ENCODE measurements at regions of chr11 and their contacts with region 1.

Region 1: GRCh38 chr11:94623120-94623735 is 56.1 kb downstream of the PIWIL4 start:
- H3K4me3 ChIP-seq: no peak overlapping the region
- H3K27ac ChIP-seq: no peak overlapping the region
- H3K4me1 ChIP-seq: no peaks in the 10 kb centered on the region
- CTCF ChIP-seq: peak; percentile 81

Region 2: DNA sequence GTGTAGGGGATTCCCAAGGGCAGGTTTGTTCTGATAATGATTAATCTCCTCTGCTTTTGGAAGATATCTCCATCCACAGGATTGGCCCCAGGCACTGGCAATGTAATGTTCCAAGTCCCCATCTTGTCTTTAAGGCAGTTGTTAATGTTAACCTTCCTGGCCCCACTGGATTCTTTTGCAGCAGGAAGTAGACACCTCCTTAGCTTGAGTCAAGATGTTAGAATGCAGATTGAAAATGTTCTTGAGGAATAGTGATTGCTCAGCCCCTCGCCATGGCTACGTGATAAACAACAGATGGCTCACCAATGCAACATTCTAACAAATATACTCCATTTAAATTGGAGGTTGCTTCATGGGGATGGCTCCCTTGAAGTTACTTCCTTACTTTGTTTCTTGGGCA is 594.8 kb before region 1 on chr11:
- CTCF ChIA-PET with region 1: no interaction called
- POLR2A ChIA-PET with region 1: no interaction called
- H3K4me3 ChIP-seq: no peak overlapping the region
- H3K27ac ChIP-seq: no peak overlapping the region
- H3K4me1 ChIP-seq: 0 out of 2 replicates have a peak, but pooled peaks cover 7% of the 10 kb centered on the region
- CTCF ChIP-seq: no peak

Region 3: DNA sequence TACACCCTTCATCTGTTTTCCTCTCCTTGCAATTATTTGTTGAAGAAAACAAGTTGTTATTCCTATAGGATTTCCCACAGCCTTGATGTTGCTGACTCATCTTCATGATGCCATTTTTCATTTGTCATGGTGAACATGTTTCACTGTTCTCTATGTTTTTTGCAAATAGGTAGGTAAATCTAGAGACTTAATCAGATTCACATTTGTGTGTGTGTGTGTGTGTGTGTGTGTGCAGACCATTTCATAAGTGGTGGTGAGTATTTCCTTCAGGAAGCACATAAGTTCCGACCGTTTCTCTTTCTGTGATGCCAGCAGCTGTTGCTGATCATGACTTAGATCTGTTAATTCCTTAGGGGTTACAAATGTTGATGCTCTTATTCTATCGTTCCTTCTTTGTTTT is 399.1 kb before region 1 on chr11:
- CTCF ChIA-PET with region 1: no interaction called
- POLR2A ChIA-PET with region 1: no interaction called
- H3K4me3 ChIP-seq: no peak overlapping the region
- H3K27ac ChIP-seq: no peak overlapping the region
- H3K4me1 ChIP-seq: no peaks in the 10 kb centered on the region
- CTCF ChIP-seq: no peak

Region 4: DNA sequence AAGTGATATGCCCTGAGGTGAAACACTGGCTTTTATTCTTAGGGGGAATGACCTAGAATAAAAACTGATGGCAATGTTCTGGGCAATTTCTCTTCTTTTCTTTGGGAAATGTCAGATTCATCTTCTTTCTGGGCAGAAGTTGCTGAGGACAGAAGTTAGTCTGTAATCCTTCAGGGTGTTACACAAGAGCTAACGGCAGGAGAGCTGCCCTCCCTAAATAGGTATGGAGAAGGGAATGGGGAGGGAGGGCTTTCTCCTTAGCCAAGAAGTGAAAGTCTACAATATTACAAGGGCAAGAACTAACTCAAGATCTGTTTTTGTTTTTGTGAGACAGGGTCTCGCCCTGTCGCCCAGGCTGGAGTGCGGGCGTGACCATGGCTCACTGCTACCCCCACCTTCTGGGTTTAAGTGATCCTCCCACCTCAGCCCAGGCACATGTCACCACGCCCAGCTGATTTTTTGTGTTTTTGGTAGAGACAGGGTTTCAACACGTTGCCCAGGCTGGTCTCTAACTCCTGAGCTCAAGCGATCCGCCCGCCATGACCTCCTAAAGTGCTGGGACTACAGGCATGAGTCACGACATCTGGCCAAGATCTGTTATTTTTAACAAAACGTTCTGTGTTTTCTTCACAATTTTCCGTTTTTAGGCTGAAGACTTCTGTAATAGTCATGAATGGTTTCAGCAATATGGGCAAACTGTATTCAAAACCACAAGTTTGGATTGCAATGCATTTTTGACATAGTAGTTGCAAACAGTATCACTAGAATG is 48.9 kb before region 1 on chr11:
- CTCF ChIA-PET with region 1: no interaction called
- POLR2A ChIA-PET with region 1: no interaction called
- H3K4me3 ChIP-seq: no peak overlapping the region
- H3K27ac ChIP-seq: no peak overlapping the region
- H3K4me1 ChIP-seq: no peaks in the 10 kb centered on the region
- CTCF ChIP-seq: no peak

Region 5: DNA sequence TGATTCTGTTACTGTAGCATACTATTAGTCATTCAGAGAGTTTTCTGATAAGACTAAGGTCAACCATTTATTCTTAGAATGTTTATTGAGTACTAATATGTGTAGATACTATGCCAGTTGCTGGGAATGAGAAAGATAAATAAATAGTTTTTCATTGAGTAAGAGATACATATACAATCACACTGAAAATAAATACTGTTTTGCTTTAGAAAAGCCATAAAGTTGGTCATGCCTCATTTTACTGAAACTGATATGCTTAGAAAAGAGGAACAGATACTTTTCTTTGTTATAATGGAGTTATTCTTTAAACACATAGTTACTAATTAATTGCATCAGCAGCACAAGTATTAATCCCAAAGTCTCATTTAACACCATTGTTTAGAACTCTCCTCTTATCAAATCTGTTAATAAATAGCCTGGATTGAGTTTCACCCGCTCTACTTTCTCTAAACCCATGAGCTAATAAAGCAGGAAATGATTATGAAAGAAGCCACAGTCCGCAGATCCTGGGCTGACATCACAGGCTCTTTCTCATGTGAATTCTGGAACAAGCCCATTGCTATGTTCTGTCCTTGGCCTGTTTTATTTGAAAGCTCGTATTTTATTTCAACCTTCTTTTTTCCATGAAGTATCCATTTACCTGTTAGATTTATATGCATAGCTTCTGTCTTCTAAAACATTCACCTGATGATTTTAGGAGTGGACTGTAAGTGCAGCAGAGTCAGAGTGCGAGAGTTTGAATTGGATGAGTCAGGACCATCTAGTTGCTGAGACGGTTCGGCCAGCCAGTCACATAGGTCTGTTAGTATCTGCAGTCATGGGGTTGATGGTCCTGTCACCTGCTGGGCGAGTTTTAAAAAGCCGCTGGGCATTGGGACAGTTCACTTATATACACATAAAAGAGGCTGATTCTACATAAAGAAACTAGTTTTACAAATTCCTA is 20.5 kb before region 1 on chr11:
- CTCF ChIA-PET with region 1: interaction called, 10 read pairs
- POLR2A ChIA-PET with region 1: no interaction called
- H3K4me3 ChIP-seq: no peak overlapping the region
- H3K27ac ChIP-seq: no peak overlapping the region
- H3K4me1 ChIP-seq: no peaks in the 10 kb centered on the region
- CTCF ChIP-seq: no peak

Region 6: DNA sequence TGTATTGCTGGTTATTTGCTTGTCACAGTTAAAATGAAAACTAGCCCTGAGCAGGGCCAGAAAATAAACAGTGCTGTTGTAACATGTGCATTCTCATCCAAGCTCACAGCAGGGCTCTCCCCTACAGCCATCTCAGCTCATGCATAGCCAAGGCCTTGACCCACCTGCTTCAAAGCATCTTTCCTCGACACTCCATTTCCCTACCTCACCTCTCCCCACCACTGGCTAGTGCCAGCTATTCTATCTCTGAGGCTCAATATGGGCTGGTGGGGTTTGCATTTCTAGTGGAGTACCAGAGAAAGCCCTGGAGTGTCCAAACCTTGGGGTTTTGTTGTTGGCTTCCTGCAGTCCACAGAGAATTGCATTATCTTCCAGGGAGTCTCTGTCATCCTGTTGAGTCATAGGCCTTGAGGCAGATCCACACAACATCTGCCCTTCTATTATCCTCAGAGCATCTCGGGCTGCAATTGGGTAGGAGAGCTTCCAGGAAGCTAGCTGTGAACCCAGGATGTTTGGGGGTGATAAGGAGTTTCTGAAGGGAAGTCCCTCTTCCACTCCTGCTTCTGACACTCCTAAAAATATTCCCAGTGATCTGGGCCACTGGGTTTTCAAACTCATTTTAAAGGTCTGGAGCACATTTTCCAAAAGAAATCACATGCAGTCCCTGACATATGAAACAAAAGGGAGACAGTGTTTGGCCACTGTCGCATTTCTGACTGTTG is 108.8 kb after region 1 on chr11:
- CTCF ChIA-PET with region 1: interaction called, 27 read pairs
- POLR2A ChIA-PET with region 1: no interaction called
- H3K4me3 ChIP-seq: no peak overlapping the region
- H3K27ac ChIP-seq: no peak overlapping the region
- H3K4me1 ChIP-seq: peaks cover 8% of the 10 kb centered on the region
- CTCF ChIP-seq: no peak

Region 7: GRCh38 chr11:94786264-94787126 is 163.3 kb after region 1 on chr11:
- CTCF ChIA-PET with region 1: interaction called, 16 read pairs
- POLR2A ChIA-PET with region 1: no interaction called
- H3K4me3 ChIP-seq: no peak overlapping the region
- H3K27ac ChIP-seq: no peak overlapping the region
- H3K4me1 ChIP-seq: peaks cover 12% of the 10 kb centered on the region
- CTCF ChIP-seq: no peak

Region 8: DNA sequence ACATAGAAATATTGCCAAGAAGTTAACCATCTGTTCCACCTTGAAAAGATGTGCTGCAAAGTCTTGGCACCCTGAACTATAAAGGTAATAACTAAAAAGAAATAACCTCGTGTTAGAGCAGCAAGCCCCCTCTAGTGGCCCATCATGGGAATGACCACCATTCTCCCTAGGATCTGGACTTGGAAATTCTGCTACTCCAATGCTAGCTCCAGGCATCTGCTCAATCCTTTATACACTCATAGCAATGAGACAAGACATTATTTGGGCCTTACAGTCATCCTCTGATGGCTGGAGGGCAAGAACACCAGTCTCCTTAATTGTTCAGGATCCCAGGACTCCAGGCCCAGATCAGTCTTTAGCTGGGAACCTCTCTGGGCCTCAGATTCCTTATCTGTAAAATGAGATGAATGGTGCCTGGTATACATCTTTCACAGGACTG is 274.1 kb after region 1 on chr11:
- CTCF ChIA-PET with region 1: interaction called, 75 read pairs
- POLR2A ChIA-PET with region 1: no interaction called
- H3K4me3 ChIP-seq: no peak overlapping the region
- H3K27ac ChIP-seq: no peak overlapping the region
- H3K4me1 ChIP-seq: no peaks in the 10 kb centered on the region
- CTCF ChIP-seq: no peak

Region 9: DNA sequence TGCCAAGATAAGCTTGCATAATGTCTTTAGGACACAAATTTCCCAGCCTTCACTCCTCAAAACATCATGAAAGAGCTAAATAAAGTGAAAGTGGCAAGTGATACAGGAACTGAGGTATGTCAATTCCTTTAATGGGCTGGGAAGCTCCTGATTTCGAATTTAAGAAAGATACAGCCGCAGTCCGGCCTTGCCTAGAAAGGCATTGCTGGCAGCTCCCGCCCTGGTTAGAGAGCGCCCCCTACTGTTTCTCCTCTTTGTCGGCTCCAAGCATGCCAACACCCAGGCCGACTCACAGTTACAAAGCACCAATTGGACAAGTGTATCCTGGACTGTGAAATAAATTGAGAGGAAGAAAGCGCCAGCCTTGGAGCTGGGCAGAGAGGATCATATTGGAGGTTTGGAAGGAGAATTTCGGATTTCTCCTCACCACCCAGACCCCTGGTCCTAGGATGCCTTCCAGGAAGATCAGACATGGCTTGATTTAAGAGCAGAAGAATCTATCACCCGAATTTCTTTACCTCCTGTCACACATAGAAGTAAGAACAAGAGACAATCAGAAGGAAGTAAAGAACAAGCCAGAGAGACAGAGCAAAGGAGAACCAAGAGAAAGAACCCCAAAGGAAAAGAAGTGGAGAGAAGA is 1082.4 kb after region 1 on chr11:
- CTCF ChIA-PET with region 1: interaction called, 10 read pairs
- POLR2A ChIA-PET with region 1: no interaction called
- H3K4me3 ChIP-seq: no peak overlapping the region
- H3K27ac ChIP-seq: no peak overlapping the region
- H3K4me1 ChIP-seq: no peaks in the 10 kb centered on the region
- CTCF ChIP-seq: peak; percentile 58; the same call in 1 of the 2 replicates